Posterior cingulate gyrus (tissue), 11 donors: ENCODE measurements at regions of chr6 and their contacts with region 1.

Region 1: DNA sequence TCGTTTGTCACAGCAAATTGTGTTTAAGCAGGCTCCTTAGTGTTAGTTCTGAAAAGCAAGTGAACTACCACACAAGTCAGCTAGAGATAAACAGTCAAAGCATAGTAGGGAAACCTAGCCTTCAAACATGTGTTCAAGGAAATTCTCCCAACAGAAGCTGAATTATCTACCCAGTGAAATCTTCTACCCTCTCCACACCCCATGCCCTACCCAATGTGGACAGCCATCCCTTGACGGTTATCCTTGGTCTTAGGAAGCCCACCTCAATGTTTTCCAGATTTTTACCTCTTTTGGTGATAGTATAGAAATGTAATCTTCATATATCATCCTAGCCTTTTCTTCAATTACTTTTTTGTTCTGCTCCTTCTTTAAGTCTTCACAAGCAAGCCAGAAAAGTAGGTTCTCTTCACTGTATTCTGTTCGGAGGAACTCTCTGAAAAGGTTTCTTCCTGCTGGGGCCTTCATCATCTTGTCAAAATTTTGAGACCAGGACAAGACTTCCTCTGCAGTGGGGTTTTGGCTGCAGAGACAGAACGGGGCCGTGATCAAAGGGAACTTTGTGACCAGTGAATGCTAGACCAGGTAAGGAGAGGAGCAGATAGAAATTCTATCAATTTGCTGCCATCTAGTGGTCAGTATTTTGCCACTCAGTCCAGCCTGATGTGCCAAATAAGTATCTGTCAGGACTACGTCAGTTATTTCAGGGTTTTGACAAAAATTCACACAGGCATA is 21.6 kb upstream of the MTRF1L start:
- DNase-seq: peak in 2 of 10 donors; percentile 8 to 19

Region 2: DNA sequence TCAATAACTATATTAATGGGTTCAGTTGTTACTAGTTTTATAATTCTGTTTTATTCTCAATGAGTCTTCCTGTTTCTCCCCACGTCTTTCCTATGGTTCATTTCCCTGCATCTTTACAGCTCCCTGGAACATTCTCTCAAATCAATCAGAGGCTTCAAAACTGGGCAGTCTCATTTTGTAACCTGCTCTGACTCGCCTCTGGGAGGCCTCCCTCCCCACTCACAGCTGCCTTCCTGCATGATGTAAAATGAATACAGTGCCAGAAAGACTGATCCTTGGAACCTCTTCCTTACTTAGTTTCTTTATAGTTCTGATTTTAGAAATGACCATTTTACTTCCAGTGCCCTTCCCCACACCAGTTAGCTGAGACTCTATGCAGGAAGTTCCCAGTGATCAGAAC is 1112.7 kb before region 1 on chr6:
- intact Hi-C with region 1: no loop called
- DNase-seq: no peak

Region 3: GRCh38 chr6:152863618-152864326 is 160.4 kb before region 1 on chr6:
- intact Hi-C with region 1: loop called (anchors 5 kb)
- DNase-seq: peak in 6 of 10 donors; percentile 41 to 72 (median 58)